ENCODE measurements at regions of chr3 and their contacts with region 1.

Region 1: GRCh38 chr3:183895296-183895695 is 10.6 kb upstream of the PARL start:
- H3K4me3 ChIP-seq: no peak overlapping the region
- H3K27ac ChIP-seq: no peak overlapping the region
- H3K4me1 ChIP-seq: no peaks in the 10 kb centered on the region
- CTCF ChIP-seq: 0 out of 2 replicates have a peak, but pooled peaks have one; percentile 20

Region 2: DNA sequence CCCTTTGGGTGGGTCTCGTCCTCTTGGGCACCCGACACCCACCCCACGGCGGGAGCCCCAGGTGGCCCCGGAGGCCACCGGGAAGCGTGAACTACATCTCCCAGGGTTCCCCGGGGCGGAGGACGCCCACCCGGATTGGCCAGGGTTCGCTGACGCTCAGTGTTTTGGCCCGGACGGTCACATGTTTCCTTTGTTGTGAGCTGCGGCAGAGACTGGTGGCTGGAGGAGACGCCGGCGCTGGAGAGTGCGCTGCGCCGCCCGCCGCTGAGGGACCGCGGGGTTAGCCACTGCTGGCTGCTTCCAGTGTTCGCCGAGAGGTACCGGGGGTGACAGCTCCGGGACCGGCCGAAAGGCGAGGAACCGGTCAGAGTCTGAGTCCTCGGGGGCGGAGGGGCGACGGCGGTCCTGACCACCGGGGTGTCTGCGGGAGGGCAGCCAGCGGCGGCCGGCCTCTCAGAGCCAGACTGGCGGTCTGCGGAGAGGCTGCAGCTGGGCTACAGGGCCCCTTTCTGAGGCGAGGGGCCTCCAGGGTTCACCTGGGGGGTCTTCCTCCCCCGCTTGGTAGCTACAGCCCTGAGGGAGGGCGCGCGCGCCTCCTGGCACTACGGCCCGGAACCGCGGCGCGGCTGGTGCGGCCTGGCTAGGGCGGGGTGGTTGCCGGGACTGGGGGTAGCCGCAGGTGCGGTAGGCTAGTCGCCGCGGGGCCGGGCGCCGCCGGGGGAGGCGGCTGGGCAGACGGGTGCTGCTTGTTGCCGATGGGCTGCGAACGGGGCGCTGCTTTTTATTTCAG is 259.7 kb before region 1 on chr3 and contains the start of gene KLHL24:
- CTCF ChIA-PET with region 1: no interaction called
- POLR2A ChIA-PET with region 1: no interaction called
- H3K4me3 ChIP-seq: peak within 1 kb of the TSS; percentile 90
- H3K27ac ChIP-seq: peak within 1 kb of the TSS; percentile 84
- H3K4me1 ChIP-seq: peaks cover 5% of the 10 kb centered on the region; the same call in 1 of the 2 replicates
- CTCF ChIP-seq: peak; percentile 41; the same call in 1 of the 2 replicates

Region 3: GRCh38 chr3:184289426-184289938 is 394.2 kb after region 1 on chr3:
- CTCF ChIA-PET with region 1: interaction called, 15 read pairs
- POLR2A ChIA-PET with region 1: no interaction called
- H3K4me3 ChIP-seq: no peak overlapping the region
- H3K27ac ChIP-seq: no peak overlapping the region
- H3K4me1 ChIP-seq: no peaks in the 10 kb centered on the region
- CTCF ChIP-seq: peak; percentile 83

Measured in HEK293 (cell line).